Activated B cell treated with CpG ODN at 0.5 μM for 24 hours (primary cell): ENCODE measurements at regions of chr3 and their contacts with region 1.

Region 1: GRCh38 chr3:107927361-107928083 is 163.3 kb downstream of the CD47 start:
- DNase-seq: peak; percentile 66
- ATAC-seq: peak; percentile 93
- H3K4me3 Mint-ChIP-seq: peak overlapping the region; percentile 86
- H3K27ac Mint-ChIP-seq: peak overlapping the region; percentile 26
- H3K4me1 Mint-ChIP-seq: peaks cover 22% of the 10 kb centered on the region
- H3K27me3 Mint-ChIP-seq: peaks cover 10% of the 10 kb centered on the region
- CTCF ChIP-seq: peak; percentile 97

Region 2: DNA sequence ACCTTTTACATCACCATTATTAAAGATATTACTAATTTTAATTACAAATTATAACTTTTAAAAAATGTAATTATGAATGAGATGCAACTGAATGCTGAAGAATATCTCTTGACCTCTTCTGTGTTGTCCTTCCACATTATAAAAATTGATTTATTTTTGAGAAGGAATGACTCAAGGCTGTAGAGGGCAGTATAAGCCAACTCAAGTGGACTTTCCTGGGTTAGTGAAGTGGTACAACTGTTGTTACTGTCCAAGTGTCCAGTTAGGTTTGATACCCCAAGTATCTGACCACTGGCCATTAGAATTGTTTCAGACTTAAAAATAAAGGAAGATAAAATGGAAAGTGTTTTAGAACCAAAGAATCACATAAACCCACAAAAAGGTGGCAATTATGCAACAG is 352.9 kb before region 1 on chr3:
- CTCF ChIA-PET with region 1: interaction called, 5 read pairs
- POLR2A ChIA-PET with region 1: no interaction called
- intact Hi-C with region 1: loop called (anchors 1 kb)
- DNase-seq: no peak
- ATAC-seq: no peak
- H3K4me3 Mint-ChIP-seq: no peak overlapping the region
- H3K27ac Mint-ChIP-seq: no peak overlapping the region
- H3K4me1 Mint-ChIP-seq: peaks cover 16% of the 10 kb centered on the region
- H3K27me3 Mint-ChIP-seq: no peaks in the 10 kb centered on the region
- CTCF ChIP-seq: no peak

Region 3: DNA sequence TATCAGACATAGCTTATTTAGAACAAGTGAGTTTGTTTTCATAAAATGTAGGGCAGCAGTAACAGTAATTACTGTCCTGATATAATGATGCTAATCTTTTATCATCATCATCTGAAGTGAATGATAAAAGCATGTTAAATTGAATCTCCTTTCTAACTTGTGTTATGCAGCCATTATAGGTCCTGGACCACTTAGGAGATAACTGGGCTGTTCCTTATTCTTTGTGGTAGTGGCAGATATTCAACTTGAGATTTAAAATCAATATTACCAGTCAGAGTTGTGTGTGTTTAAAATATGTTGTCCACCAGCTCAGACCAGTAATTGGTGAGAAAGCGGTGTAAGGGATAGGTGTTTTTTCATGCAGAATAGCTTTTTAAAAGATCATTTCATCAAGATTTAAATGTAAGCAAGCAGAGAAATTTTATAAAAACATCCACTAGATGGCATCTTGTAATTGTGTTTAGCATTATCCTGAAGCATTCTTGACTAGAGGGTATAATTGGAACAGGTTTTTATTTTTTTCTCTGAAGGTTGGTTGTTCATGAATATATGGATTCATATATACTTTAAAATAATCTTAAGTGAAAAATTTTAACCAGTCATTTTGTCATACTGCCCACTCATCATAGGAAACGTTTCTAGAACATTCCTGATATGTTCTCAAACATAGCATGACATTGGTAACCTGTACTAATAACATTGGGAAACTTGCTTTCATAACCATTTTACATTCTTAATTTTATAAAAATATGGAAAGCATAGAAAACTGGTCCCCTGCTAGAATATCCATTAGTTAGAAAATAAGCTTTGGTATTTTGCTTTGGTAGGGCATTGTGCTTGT is 250.8 kb before region 1 on chr3:
- CTCF ChIA-PET with region 1: interaction called, 16 read pairs
- POLR2A ChIA-PET with region 1: no interaction called
- intact Hi-C with region 1: loop called (anchors 5 kb)
- DNase-seq: no peak
- ATAC-seq: no peak
- H3K4me3 Mint-ChIP-seq: peak overlapping the region; percentile 42
- H3K27ac Mint-ChIP-seq: peak overlapping the region; percentile 67
- H3K4me1 Mint-ChIP-seq: peaks cover 53% of the 10 kb centered on the region
- H3K27me3 Mint-ChIP-seq: no peaks in the 10 kb centered on the region
- CTCF ChIP-seq: no peak

Region 4: DNA sequence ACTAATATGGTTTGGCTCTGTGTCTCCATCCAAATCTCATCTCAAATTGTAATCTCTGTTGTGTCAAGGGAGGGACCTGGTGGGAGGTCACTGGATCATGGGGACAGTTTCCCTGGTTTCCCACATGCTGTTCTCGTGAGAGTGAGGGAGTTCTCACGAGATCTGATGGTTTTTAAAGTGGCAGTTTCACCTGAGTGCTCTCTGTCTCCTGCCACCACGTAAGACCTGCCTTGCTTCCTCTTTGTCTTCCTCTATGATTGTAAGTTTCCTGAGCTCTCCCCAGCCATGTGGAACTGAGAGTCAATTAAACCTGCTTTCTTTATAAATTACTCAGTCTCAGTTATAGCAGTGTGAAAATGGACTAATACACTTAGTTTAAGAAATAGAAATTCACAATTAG is 65.6 kb before region 1 on chr3:
- CTCF ChIA-PET with region 1: no interaction called
- POLR2A ChIA-PET with region 1: no interaction called
- intact Hi-C with region 1: loop called (anchors 2 kb)
- DNase-seq: peak; percentile 18
- ATAC-seq: peak; percentile 96
- H3K4me3 Mint-ChIP-seq: peak overlapping the region; percentile 60
- H3K27ac Mint-ChIP-seq: peak overlapping the region; percentile 73
- H3K4me1 Mint-ChIP-seq: peaks cover 16% of the 10 kb centered on the region
- H3K27me3 Mint-ChIP-seq: no peaks in the 10 kb centered on the region
- CTCF ChIP-seq: no peak

Region 5: GRCh38 chr3:108062051-108062450 is 134.5 kb after region 1 on chr3:
- CTCF ChIA-PET with region 1: no interaction called
- POLR2A ChIA-PET with region 1: no interaction called
- intact Hi-C with region 1: loop called (anchors 5 kb)
- DNase-seq: no peak
- ATAC-seq: peak; percentile 93
- H3K4me3 Mint-ChIP-seq: peak overlapping the region; percentile 11
- H3K27ac Mint-ChIP-seq: peak overlapping the region; percentile 66
- H3K4me1 Mint-ChIP-seq: peaks cover 81% of the 10 kb centered on the region
- H3K27me3 Mint-ChIP-seq: no peaks in the 10 kb centered on the region
- CTCF ChIP-seq: no peak

Region 6: DNA sequence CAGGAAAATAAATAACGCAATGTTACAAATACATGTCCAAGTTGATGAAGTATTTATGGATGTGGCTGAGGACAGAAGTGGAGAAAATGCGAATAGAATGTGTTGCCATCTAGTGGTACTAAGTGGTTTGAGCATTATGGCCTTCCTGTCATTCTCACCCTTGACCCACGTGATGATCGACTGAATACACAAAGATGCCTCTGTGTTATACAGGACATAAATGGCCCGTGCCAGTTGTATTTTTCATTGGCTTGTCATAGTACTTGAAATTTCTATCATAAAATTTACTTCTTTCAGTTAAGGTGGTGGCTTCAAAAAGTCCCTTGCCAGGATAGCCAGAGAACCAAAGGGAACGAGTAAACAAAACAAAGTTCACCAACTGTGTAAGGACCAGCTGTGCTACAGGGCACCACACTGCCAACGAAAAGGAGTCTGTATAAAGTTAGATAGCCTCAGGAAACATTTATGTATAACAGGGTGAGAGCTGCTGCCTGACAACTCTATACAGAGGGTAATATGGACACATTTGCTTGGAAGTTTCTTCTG is 479.2 kb after region 1 on chr3:
- CTCF ChIA-PET with region 1: interaction called, 13 read pairs
- POLR2A ChIA-PET with region 1: no interaction called
- intact Hi-C with region 1: loop called (anchors 1 kb)
- DNase-seq: no peak
- ATAC-seq: peak; percentile 87
- H3K4me3 Mint-ChIP-seq: peak overlapping the region; percentile 35
- H3K27ac Mint-ChIP-seq: peak overlapping the region; percentile 87
- H3K4me1 Mint-ChIP-seq: peaks cover 28% of the 10 kb centered on the region
- H3K27me3 Mint-ChIP-seq: no peaks in the 10 kb centered on the region
- CTCF ChIP-seq: no peak